Left colon (tissue), 2 donors: ENCODE measurements at regions of chr15 and their contacts with region 1.

Region 1: DNA sequence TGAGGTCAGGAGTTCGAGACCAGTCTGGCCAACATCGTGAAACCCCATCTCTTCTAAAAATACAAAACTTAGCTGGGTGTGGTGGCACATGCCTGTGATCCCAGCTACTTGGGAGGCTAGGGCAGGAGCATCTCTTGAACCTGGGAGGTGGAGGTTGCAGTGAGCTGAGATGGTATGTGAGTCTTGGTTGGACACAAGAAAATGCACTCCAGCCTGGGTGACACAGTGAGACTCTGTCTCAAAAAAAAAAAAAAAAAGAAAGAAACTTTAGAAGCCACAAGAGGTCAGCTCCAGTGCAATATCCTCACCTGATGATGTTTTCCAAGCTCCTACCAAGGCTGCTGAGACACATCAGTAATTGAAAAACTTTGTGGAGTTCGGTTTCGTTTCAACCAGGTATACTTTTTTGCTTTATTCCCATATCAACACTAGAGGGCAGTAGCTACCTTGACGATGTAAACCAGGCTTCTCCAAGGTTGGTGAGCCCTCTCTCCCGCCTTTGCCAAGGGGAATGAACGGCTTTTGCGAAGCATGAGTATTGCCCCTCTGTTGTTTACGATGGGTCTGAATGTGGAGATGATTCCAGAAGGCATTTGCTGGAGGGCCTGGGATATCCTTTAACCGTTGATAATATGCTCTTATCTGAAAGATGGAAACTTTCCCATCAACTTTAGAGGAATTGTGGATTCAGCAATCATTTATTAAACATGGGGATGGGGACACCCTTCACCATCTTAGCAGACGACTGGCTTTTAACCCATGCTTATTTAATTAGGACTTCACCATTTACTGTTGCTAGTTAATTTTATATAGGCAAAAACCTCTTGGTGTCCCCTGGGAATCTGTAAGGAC is 202.8 kb downstream of the SV2B start:
- DNase-seq: peak in 1 of 2 donors; percentile 22
- ATAC-seq: peak; percentile 76

Region 2: DNA sequence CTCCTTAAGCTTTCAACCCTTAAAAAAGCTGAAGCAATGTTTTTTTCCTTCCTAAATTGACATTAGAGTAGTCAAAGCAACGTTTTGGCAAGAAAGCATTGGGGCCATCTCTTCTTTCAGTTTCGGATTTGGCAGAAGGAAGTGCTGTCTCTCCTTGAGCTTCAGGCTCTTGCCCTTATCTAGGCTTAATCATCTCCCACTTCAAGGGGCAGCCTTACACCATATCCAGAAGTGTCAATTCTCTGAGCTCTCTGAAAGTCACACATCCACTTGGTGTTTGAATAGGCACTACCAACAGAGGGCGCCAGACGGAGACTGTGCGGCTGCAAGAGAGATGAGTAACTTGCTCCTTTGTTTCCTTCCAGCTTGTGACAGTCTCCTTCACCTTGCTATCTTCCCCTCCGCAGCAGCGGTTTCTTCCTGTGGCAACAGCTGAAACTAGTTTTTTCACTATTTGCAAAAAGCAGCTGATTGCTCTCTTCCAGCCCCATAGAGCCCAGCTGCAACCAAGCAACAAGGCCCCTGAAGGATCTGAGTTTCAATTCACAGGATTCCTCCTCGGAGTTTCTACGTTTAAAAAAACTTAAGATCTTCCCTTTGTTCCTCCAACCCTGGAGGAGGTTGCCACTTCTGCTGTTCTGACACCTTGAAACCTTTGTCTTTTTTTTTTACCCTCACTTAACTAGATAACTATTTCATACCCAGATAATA is 403.7 kb after region 1 on chr15:
- intact Hi-C with region 1: loop called in 1 of 2 experiments (anchors 10 kb)
- DNase-seq: peak; percentile 71 to 74
- ATAC-seq: peak; percentile 79

Region 3: DNA sequence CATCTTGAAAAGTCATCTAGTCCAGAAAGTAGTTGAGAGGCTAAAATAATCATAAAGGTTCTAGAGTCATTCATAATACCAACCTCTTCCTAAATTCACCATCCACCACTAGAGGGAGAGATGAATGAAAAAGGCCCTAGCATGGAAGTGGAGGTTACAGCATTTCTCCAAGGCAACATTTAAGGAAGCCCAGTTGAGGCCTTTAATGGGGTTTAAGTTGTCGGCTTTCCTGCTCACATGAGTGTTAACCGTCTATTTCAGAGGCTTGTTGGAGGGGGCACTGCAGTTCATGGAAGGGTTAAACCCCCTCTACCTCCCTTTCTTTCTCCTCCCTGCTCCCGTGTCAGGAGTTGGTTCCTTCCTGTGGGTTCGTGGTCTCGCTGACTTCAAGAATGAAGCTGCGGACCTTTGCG is 546.9 kb after region 1 on chr15:
- intact Hi-C with region 1: loop called in 1 of 2 experiments (anchors 10 kb)
- DNase-seq: no peak
- ATAC-seq: no peak

Region 4: DNA sequence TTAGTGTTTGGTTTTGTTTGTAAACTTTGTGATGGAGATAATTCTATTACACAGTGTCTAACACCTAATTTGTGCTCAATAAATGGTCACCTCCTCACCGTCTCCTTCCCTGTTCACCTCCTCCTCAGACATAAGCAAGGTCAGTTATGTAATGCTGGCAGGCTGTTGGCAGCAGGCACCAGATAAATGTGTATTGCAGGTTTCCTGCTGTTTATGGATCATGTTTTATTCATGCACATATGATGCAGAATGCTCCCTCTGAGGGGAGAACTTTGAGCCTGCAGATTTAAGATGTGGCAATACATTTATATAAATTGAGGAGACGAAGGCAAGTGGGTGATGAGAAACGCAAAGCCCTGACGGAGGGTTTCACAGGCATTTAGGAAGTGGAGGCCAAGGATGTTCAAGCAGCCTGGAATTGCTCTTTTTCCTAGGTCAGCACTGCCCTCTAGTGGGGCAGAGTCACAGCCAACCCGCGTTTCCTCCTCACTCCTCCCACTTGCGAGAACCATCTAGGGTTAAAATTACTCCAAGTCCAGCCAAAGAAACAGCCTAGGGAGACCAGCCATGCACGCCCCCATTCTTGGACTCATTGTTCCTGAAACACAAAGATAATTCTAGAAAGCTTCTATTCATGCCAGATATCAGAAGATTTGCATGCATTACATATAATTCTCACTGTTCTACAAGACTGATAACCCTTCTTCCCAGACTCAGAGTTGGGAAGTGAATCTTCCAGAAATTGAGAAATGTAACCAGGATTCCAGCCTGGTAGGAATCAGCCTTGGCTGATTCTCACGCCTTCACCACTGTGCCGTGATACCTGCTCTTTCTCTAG is 779.4 kb after region 1 on chr15:
- intact Hi-C with region 1: loop called in 1 of 2 experiments (anchors 5 kb)
- DNase-seq: peak; percentile 38 to 67
- ATAC-seq: peak; percentile 76